GM12878 (cell line): ENCODE measurements at regions of chr4 and their contacts with region 1.

Region 1: GRCh38 chr4:177047070-177047850 is 254.5 kb upstream of the VEGFC start:
- DNase-seq: no peak
- ATAC-seq: peak; percentile 94
- H3K4me3 ChIP-seq: no peak overlapping the region
- H3K27ac ChIP-seq: no peak overlapping the region
- H3K4me1 ChIP-seq: no peaks in the 10 kb centered on the region
- H3K27me3 ChIP-seq: no peaks in the 10 kb centered on the region; a peak in 1 of 4 replicates
- CTCF ChIP-seq: peak; percentile 67 to 75 (median 72)
- EP300 ChIP-seq: no peak
- POLR2A ChIP-seq: no peak
- RAD21 ChIP-seq: peak; percentile 70

Region 2: GRCh38 chr4:176377780-176378179 is 669.5 kb before region 1 on chr4:
- CTCF ChIA-PET with region 1: interaction called, 109 read pairs
- POLR2A ChIA-PET with region 1: no interaction called
- RAD21 ChIA-PET with region 1: interaction called, 51 read pairs
- SMC1A ChIA-PET with region 1: interaction called, 66 read pairs
- in situ Hi-C with region 1: loop called (anchors 5 kb)
- intact Hi-C with region 1: loop called (anchors 1 kb)
- DNase-seq: no peak
- ATAC-seq: peak; percentile 86
- H3K4me3 ChIP-seq: no peak overlapping the region
- H3K27ac ChIP-seq: no peak overlapping the region
- H3K4me1 ChIP-seq: no peaks in the 10 kb centered on the region
- H3K27me3 ChIP-seq: no peaks in the 10 kb centered on the region
- CTCF ChIP-seq: peak; percentile 38 to 69 (median 61); a peak in 5 of 6 replicates
- EP300 ChIP-seq: no peak
- POLR2A ChIP-seq: no peak
- RAD21 ChIP-seq: peak; percentile 87

Region 3: DNA sequence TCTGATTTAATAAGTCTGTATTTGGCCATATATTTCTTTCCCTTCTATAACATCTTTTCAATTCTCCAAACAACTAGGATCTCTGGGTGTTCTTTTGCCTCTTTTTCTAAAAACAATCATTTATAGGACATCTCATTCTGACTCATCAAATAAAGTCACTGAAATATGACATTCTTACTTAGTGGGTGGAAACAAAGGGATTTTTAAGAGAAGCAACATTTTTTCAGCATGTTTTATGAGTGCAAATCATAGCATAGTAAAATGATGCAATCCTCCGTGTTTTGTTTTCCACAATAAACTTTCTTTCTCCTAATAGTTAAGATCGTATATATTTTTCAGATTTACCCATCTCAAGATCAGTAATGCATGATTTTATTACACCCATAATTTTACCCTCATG is 547.7 kb before region 1 on chr4:
- CTCF ChIA-PET with region 1: no interaction called
- POLR2A ChIA-PET with region 1: no interaction called
- RAD21 ChIA-PET with region 1: no interaction called
- SMC1A ChIA-PET with region 1: no interaction called
- in situ Hi-C with region 1: no loop called
- intact Hi-C with region 1: no loop called
- DNase-seq: no peak
- ATAC-seq: no peak
- H3K4me3 ChIP-seq: no peak overlapping the region
- H3K27ac ChIP-seq: no peak overlapping the region
- H3K4me1 ChIP-seq: no peaks in the 10 kb centered on the region
- H3K27me3 ChIP-seq: no peaks in the 10 kb centered on the region
- CTCF ChIP-seq: no peak
- EP300 ChIP-seq: no peak
- POLR2A ChIP-seq: no peak
- RAD21 ChIP-seq: no peak

Region 4: DNA sequence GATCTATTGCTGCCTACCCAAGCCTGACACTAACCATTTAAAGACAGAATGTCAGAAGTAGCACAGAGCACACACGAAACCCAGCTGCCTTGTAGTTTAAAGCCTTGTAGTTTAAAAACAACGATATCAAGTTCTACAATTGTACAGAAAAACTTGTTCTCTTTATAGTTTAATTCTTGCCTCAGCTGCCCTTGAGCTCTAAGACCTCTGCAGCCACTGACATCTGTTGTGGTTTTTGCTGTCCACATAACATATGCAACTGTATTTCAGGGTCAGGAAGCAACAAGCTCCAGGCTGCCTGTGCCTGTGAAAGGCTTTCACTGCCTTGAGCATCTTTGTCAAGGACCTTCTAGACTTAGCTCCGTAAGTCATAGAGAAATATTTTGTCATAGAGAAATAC is 500.3 kb before region 1 on chr4:
- CTCF ChIA-PET with region 1: no interaction called
- POLR2A ChIA-PET with region 1: no interaction called
- RAD21 ChIA-PET with region 1: no interaction called
- SMC1A ChIA-PET with region 1: no interaction called
- in situ Hi-C with region 1: no loop called
- intact Hi-C with region 1: no loop called
- DNase-seq: no peak
- ATAC-seq: no peak
- H3K4me3 ChIP-seq: no peak overlapping the region
- H3K27ac ChIP-seq: no peak overlapping the region
- H3K4me1 ChIP-seq: no peaks in the 10 kb centered on the region
- H3K27me3 ChIP-seq: no peaks in the 10 kb centered on the region; a peak in 2 of 4 replicates
- CTCF ChIP-seq: no peak
- EP300 ChIP-seq: no peak
- POLR2A ChIP-seq: no peak
- RAD21 ChIP-seq: no peak

Region 5: GRCh38 chr4:176789955-176790354 is 257.3 kb before region 1 on chr4:
- CTCF ChIA-PET with region 1: interaction called, 5 read pairs
- POLR2A ChIA-PET with region 1: no interaction called
- RAD21 ChIA-PET with region 1: interaction called, 5 read pairs
- SMC1A ChIA-PET with region 1: interaction called, 3 read pairs
- in situ Hi-C with region 1: no loop called
- intact Hi-C with region 1: loop called (anchors 2 kb)
- DNase-seq: no peak
- ATAC-seq: peak; percentile 83
- H3K4me3 ChIP-seq: no peak overlapping the region
- H3K27ac ChIP-seq: no peak overlapping the region
- H3K4me1 ChIP-seq: no peaks in the 10 kb centered on the region
- H3K27me3 ChIP-seq: peaks cover 3 to 13% of the 10 kb centered on the region in 2 experiments; a peak in 3 of 4 replicates
- CTCF ChIP-seq: peak; percentile 56 to 65 (median 63)
- EP300 ChIP-seq: no peak
- POLR2A ChIP-seq: no peak
- RAD21 ChIP-seq: peak; percentile 57

Region 6: DNA sequence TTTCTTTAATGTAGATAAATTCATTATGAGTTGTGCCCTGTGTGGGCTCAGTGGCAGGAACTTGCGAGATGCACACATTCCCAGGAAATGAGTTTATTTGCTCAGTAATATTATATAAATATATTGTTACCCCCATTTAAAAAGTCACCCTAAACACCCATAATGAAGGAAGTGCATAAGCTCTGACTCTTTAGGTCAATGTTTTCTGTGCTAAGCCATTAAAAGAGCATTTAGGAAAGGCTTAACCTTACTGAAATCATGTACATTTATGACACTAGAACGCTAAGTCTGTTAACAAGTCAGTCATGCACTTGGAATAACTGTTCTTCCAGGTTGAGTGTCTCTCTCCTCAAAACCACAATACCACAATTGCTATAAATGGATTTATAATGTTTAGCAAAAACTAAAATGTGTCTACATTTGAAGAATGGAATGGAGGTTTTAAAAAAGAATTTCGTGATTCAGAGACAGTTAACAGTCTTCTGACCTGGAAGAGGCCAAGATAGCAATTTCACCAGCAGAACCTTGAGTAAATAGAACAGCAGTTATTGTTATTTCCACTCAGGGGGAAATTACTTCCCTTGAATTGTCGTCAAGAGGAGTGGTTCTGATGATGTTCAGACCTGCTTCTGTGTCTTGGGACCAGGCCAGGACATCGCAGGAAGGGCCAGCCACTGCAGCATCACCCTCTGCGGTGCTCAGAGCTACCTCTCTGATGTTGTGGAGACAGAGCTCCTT is 163.4 kb before region 1 on chr4:
- CTCF ChIA-PET with region 1: no interaction called
- POLR2A ChIA-PET with region 1: no interaction called
- RAD21 ChIA-PET with region 1: no interaction called
- SMC1A ChIA-PET with region 1: no interaction called
- in situ Hi-C with region 1: no loop called
- intact Hi-C with region 1: no loop called
- DNase-seq: no peak
- ATAC-seq: no peak
- H3K4me3 ChIP-seq: no peak overlapping the region
- H3K27ac ChIP-seq: no peak overlapping the region
- H3K4me1 ChIP-seq: no peaks in the 10 kb centered on the region
- H3K27me3 ChIP-seq: no peaks in the 10 kb centered on the region
- CTCF ChIP-seq: no peak
- EP300 ChIP-seq: no peak
- POLR2A ChIP-seq: no peak
- RAD21 ChIP-seq: no peak

Region 7: DNA sequence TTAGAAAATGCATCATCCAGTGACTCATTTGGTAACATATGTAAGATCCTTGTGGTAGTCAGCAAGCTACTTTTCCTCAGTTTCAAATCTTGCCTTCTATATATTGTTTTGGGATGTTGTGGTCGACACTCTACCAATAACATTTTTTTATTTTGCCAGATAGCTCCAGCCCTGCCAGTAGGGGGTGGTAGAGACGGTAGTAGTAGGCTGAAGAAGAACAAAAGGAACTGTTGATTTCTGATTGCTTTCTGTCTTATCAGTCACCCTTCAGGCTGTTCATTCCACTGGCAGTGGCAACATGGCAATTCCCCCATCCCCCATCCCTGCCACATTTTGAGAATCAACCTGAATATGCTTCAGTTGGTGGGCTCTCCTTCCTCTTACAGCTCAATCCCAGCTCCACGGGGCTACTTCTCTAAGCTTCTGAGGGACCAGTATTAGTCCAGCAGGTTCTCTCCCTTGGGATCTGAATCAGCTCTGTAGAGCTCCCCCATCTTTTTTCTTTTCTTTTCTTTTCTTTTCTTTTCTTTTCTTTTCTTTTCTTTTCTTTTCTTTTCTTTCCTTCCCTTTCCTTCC is 83.1 kb before region 1 on chr4:
- CTCF ChIA-PET with region 1: interaction called, 29 read pairs
- POLR2A ChIA-PET with region 1: no interaction called
- RAD21 ChIA-PET with region 1: interaction called, 13 read pairs
- SMC1A ChIA-PET with region 1: interaction called, 5 read pairs
- in situ Hi-C with region 1: no loop called
- intact Hi-C with region 1: loop called (anchors 5 kb)
- DNase-seq: no peak
- ATAC-seq: peak; percentile 53
- H3K4me3 ChIP-seq: no peak overlapping the region
- H3K27ac ChIP-seq: no peak overlapping the region
- H3K4me1 ChIP-seq: no peaks in the 10 kb centered on the region
- H3K27me3 ChIP-seq: no peaks in the 10 kb centered on the region
- CTCF ChIP-seq: peak; percentile 25 to 44 (median 43); a peak in 5 of 6 replicates
- EP300 ChIP-seq: no peak
- POLR2A ChIP-seq: no peak
- RAD21 ChIP-seq: no peak

Region 8: DNA sequence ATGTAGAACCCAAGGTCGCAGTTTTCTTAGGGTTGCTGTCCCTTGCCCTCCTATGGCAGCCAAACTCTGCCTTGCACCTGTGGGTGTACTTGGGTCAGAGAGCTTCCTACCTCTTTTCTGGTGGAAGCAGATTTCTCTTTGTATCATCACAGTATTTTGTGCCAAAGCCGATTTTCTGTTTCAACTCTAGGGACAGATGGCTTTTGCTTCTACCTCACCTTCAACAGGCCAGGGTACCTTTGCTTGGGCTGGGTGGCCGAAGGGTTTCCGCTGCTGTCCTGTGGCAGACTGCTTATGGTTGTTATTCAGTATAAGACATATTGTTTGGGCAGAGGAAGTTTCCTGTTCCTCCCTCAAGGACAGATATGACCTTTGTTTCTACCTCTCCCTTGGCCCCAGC is 284.9 kb after region 1 on chr4:
- CTCF ChIA-PET with region 1: interaction called, 6 read pairs
- POLR2A ChIA-PET with region 1: no interaction called
- RAD21 ChIA-PET with region 1: interaction called, 3 read pairs
- SMC1A ChIA-PET with region 1: interaction called, 10 read pairs
- in situ Hi-C with region 1: loop called (anchors 5 kb)
- intact Hi-C with region 1: no loop called
- DNase-seq: no peak
- ATAC-seq: no peak
- H3K4me3 ChIP-seq: no peak overlapping the region
- H3K27ac ChIP-seq: no peak overlapping the region
- H3K4me1 ChIP-seq: no peaks in the 10 kb centered on the region
- H3K27me3 ChIP-seq: no peaks in the 10 kb centered on the region
- CTCF ChIP-seq: no peak
- EP300 ChIP-seq: no peak
- POLR2A ChIP-seq: no peak
- RAD21 ChIP-seq: no peak